BJ (cell line): ENCODE measurements at regions of chr10 and their contacts with region 1.

Region 1: GRCh38 chr10:73931767-73932619 is 21.1 kb downstream of the PLAU start:
- DNase-seq: no peak
- H3K4me3 ChIP-seq: no peak overlapping the region
- H3K27me3 ChIP-seq: no peaks in the 10 kb centered on the region
- CTCF ChIP-seq: no peak

Region 2: GRCh38 chr10:74121368-74121767 is 189.4 kb after region 1 on chr10:
- CTCF ChIA-PET with region 1: no interaction called
- POLR2A ChIA-PET with region 1: interaction called, 10 read pairs
- DNase-seq: no peak
- H3K4me3 ChIP-seq: no peak overlapping the region
- H3K27me3 ChIP-seq: no peaks in the 10 kb centered on the region
- CTCF ChIP-seq: no peak